Prostate gland (tissue), 2 donors: ENCODE measurements at regions of chr10 and their contacts with region 1.

Region 1: DNA sequence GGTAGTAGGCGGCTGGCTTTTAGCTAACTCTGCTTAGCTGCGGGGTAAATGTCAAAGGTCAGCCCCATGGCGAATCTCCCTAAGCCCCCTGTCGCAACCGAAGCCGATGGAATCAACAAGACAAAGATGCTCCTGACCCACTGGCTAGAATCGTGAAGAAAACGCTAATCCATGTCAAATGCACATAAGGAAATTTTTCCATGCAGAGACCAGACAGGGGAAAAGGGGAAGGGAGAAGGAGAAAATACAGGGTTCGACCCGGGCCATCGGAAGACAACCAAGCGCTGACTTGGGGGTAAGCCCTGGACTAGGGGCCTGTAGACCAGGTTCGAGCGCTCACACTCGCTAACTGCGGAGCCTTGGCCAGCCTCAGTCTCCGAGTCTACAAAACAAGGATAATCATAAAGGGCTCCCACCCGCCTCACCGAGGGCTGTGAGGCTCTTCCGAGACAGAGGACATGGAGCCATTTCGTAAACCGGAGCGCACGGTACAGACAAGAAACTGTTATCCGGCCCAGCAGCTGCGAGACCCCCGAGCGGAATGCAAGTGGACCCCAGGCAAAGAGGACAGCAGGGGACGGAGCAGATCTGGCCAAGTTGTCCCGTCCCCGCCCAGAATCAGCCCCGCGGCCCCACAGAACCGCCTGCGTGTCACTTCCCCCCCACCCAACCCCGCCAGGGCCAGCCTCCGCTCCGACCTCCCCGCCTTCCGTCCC is 507 bp downstream of the SAR1A start:
- DNase-seq: no peak
- H3K4me3 ChIP-seq: peak overlapping the region; percentile 64 to 84
- H3K27ac ChIP-seq: peak overlapping the region; percentile 92 to 93
- H3K4me1 ChIP-seq: no peaks in the 10 kb centered on the region
- H3K27me3 ChIP-seq: no peaks in the 10 kb centered on the region
- CTCF ChIP-seq: no peak
- POLR2A ChIP-seq: no peak

Region 2: DNA sequence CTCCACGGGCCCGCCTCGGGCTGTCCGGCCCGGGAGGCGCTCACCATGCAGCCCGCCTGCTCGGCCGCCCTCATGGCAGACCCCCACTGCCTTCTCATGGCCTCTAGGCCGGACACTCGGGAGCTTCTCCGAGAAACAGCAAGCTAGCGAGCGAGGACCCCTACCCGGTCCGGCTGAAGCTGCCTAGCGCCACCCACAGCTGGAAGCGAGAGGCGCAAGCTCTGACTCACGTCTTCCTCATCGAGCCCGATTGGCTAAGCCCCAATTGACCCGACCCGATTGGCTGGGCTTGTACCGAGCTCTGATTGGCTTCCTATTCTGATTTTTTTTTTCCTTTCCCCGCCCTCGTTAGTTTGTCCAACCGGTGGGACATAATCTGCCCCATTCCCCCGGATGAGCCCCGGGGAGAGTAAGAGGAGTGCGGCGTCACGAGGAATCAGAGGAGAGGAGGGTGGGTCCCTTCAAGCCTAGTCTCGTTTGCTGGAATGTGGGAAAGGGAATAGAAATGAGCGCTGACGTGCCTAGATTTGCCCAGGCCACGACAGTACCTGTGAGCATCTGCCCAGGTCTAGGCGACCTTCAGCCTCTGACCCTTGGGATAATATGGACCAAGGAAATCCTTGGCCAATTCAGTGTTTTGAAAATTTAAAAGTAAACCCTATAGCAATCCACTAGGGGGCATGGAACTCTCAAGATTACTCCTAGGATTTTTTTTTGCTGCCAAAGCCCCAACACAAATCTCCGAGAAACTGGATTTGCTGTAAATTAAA is 23.1 kb before region 1 on chr10 and contains the start of gene TYSND1:
- intact Hi-C with region 1: loop called (anchors 2 kb)
- DNase-seq: peak; percentile 99
- H3K4me3 ChIP-seq: peak within 1 kb of the TSS; percentile 51 to 69
- H3K27ac ChIP-seq: peak within 1 kb of the TSS; percentile 83 to 89
- H3K4me1 ChIP-seq: peaks cover 8% of the 10 kb centered on the region
- H3K27me3 ChIP-seq: no peaks in the 10 kb centered on the region
- CTCF ChIP-seq: peak; percentile 53 to 95 (median 77)
- POLR2A ChIP-seq: peak; percentile 93
- total RNA-seq, gene TYSND1: 18.2 to 32.4 TPM